CD8-positive, alpha-beta memory T cell (primary cell): ENCODE measurements at regions of chr6 and their contacts with region 1.

Region 1: DNA sequence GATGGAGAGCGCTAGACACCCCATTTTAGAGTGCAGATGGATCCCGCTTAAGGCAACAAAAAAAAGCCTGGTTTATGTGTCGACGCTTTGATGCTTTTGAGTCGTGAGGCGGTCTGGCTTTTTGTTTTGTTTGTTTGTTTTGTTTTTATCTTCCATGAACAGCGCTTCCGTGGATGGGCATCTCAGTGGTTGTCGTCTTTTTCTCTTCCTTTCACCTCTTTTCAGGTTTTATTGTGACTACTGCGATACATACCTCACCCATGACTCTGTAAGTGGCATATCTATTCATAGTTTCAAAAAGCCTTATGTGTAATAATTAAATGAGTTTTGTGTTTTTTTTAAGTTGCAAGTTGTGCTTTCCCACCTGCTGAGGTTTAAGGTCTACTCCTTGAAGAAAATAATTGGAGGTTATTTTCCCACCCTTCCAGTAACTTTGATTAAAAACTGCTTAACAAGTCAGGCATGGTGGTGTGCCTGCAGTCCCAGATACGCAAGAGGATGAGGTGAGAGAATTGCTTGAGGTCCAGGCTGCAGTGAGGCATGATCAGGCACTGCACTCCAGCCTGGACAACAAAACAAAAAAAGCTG is 476 bp downstream of the SNRPC start:
- DNase-seq: no peak
- H3K4me3 ChIP-seq: peak overlapping the region; percentile 87
- H3K4me3 Mint-ChIP-seq: no peak overlapping the region
- H3K27ac ChIP-seq: peak overlapping the region; percentile 93
- H3K27ac Mint-ChIP-seq: no peak overlapping the region
- H3K4me1 ChIP-seq: peaks cover 14% of the 10 kb centered on the region
- H3K4me1 Mint-ChIP-seq: peaks cover 5 to 29% (median 9%) of the 10 kb centered on the region in 3 donors
- H3K27me3 ChIP-seq: no peaks in the 10 kb centered on the region
- H3K27me3 Mint-ChIP-seq: no peaks in the 10 kb centered on the region

Region 2: DNA sequence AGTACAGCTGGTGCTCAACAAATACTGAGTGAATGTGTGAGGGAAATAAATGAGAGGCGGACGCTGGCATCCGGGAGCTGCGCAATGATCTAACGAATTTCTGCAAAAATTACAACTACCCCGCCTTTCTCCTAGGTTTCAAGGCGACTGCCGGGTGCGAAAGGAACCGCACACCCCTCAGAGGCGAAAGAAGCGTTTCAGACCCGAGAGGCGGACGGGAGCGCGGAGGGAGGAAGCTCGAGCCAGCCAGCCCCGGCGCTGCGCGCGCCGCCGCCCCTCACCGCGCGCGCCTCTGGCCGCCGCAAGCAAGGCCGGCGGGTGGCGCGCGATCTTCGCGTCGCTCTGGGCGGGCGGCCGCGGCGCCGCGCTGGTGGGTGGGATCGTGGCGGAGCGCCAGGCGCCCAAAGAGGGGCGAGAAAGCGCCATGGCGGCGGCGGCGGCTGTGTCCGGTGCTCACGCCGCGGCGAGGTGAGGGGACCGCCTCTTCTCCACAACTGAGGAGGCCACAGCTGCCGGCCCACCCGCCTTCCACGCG is 34.0 kb after region 1 on chr6 and contains the start of gene BLTP3A:
- CTCF ChIA-PET with region 1: interaction called, 8 read pairs
- POLR2A ChIA-PET with region 1: interaction called, 16 read pairs
- DNase-seq: peak; percentile 60 to 82 (median 75)
- H3K4me3 ChIP-seq: peak within 1 kb of the TSS; percentile 98
- H3K4me3 Mint-ChIP-seq: peak within 1 kb of the TSS; percentile 92 to 98 (median 97)
- H3K27ac ChIP-seq: peak within 1 kb of the TSS; percentile 93
- H3K27ac Mint-ChIP-seq: peak within 1 kb of the TSS; percentile 83 to 97 (median 93)
- H3K4me1 ChIP-seq: peaks cover 19% of the 10 kb centered on the region
- H3K4me1 Mint-ChIP-seq: peaks cover 22 to 25% (median 23%) of the 10 kb centered on the region in 3 donors
- H3K27me3 ChIP-seq: no peaks in the 10 kb centered on the region
- H3K27me3 Mint-ChIP-seq: no peaks in the 10 kb centered on the region
- total RNA-seq, gene BLTP3A: 18.8 to 19.4 TPM